HepG2 (cell line): ENCODE measurements at regions of chr12 and their contacts with region 1.

Region 1: GRCh38 chr12:100573292-100574186 is at the start of gene GAS2L3:
- DNase-seq: peak; percentile 83
- ATAC-seq: peak; percentile 96
- H3K4me3 ChIP-seq: peak within 1 kb of the TSS; percentile 62 to 80 (median 78)
- H3K27ac ChIP-seq: peak within 1 kb of the TSS; percentile 68
- H3K4me1 ChIP-seq: peaks cover 31% of the 10 kb centered on the region
- H3K27me3 ChIP-seq: peaks cover 0 to 4% of the 10 kb centered on the region in 2 experiments; a peak in 1 of 5 replicates
- CTCF ChIP-seq: peak; percentile 19; the same call in 1 of the 2 replicates
- EP300 ChIP-seq: no peak
- POLR2A ChIP-seq: peak; percentile 77 to 81
- RAD21 ChIP-seq: no peak
- total RNA-seq, gene GAS2L3: 20.8 and 21.3 TPM in 2 replicates

Region 2: GRCh38 chr12:100593490-100593889 is 20.0 kb after region 1 on chr12:
- CTCF ChIA-PET with region 1: no interaction called
- POLR2A ChIA-PET with region 1: no interaction called
- in situ Hi-C with region 1: no loop called
- intact Hi-C with region 1: loop called (anchors 2 kb)
- DNase-seq: peak; percentile 65
- ATAC-seq: peak; percentile 81
- H3K4me3 ChIP-seq: peak overlapping the region in 2 of 3 experiments; percentile 29 to 34; a peak in 3 of 6 replicates
- H3K27ac ChIP-seq: peak overlapping the region; percentile 63
- H3K4me1 ChIP-seq: peaks cover 31% of the 10 kb centered on the region
- H3K27me3 ChIP-seq: no peaks in the 10 kb centered on the region
- CTCF ChIP-seq: no peak
- EP300 ChIP-seq: no peak
- POLR2A ChIP-seq: no peak
- RAD21 ChIP-seq: no peak

Region 3: GRCh38 chr12:100651694-100652093 is 78.2 kb after region 1 on chr12:
- CTCF ChIA-PET with region 1: no interaction called
- POLR2A ChIA-PET with region 1: no interaction called
- in situ Hi-C with region 1: no loop called
- intact Hi-C with region 1: loop called (anchors 2 kb)
- DNase-seq: peak; percentile 15
- ATAC-seq: peak; percentile 94
- H3K4me3 ChIP-seq: no peak overlapping the region
- H3K27ac ChIP-seq: peak overlapping the region; percentile 26
- H3K4me1 ChIP-seq: peaks cover 36% of the 10 kb centered on the region
- H3K27me3 ChIP-seq: no peaks in the 10 kb centered on the region
- CTCF ChIP-seq: peak; percentile 64
- EP300 ChIP-seq: no peak
- POLR2A ChIP-seq: no peak
- RAD21 ChIP-seq: 0 out of 2 replicates have a peak, but pooled peaks have one; percentile 12

Region 4: DNA sequence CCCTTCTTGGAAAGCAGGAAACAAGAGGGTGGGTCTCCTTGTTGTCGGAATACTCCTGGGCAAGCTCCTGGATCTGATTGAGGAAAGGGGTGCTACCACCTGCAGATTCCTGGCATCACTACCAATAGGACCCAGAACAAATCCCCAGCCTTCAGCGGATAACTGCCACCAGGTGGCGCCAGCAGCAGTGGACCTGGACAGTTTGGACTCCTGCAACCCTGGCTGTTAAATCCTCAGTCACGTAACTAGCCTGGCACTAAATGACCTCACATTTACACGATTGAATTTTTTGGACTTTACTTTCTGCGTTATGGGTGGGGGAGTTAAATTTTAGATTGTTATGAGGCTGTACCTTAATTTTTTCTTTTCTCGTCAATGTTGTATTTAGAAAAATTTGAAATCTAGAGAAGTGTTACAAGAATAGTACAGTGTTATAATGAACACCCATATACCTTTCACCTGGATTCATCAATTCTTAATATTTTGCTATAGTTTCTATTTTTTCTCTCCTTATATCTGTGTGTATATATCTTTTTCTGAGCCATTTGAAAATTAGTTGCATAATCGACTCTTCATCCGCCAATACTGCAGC is 95.5 kb after region 1 on chr12:
- CTCF ChIA-PET with region 1: no interaction called
- POLR2A ChIA-PET with region 1: no interaction called
- in situ Hi-C with region 1: no loop called
- intact Hi-C with region 1: loop called (anchors 5 kb)
- DNase-seq: peak; percentile 66
- ATAC-seq: peak; percentile 88
- H3K4me3 ChIP-seq: no peak overlapping the region
- H3K27ac ChIP-seq: no peak overlapping the region
- H3K4me1 ChIP-seq: peaks cover 11% of the 10 kb centered on the region; the same call in 1 of the 2 replicates
- H3K27me3 ChIP-seq: peaks cover 1 to 4% of the 10 kb centered on the region in 2 experiments; a peak in 3 of 5 replicates
- CTCF ChIP-seq: peak; percentile 86
- EP300 ChIP-seq: no peak
- POLR2A ChIP-seq: no peak
- RAD21 ChIP-seq: peak; percentile 47; the same call in 1 of the 2 replicates